OCI-LY7 (cell line): ENCODE measurements at regions of chr3 and their contacts with region 1.

Region 1: GRCh38 chr3:41198950-41199865 is at the start of gene CTNNB1:
- DNase-seq: peak; percentile 95
- H3K4me3 ChIP-seq: peak within 1 kb of the TSS; percentile 99
- H3K27ac ChIP-seq: peak within 1 kb of the TSS; percentile 85
- H3K4me1 ChIP-seq: peaks cover 32% of the 10 kb centered on the region
- CTCF ChIP-seq: no peak
- total RNA-seq, gene CTNNB1: 201 and 237 TPM in 2 replicates

Region 2: DNA sequence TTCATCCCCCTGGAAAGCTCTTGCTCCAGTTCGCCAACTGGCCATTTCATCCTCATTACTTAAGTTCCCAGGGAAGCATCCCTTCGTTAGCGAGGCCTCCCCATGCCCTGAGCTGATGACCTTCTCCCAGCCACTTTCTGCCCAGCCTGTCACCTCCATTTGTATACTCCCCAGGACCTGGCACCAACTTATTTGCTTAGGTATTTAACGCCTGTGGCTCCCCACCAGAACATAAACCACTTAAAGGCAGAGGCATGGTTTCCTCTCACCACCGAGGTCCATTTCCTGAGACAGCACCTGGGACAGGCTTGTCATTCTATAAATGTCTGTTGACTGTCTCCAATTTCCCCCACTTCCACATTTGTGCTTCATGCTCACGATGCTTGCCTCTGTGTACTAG is 485.4 kb before region 1 on chr3:
- CTCF ChIA-PET with region 1: no interaction called
- POLR2A ChIA-PET with region 1: interaction called, 3 read pairs
- intact Hi-C with region 1: loop called (anchors 2 kb)
- DNase-seq: peak; percentile 85
- H3K4me3 ChIP-seq: peak overlapping the region; percentile 9
- H3K27ac ChIP-seq: peak overlapping the region; percentile 68
- H3K4me1 ChIP-seq: peaks cover 63% of the 10 kb centered on the region
- CTCF ChIP-seq: no peak

Region 3: GRCh38 chr3:41117398-41117870 is 81.8 kb before region 1 on chr3:
- CTCF ChIA-PET with region 1: no interaction called
- POLR2A ChIA-PET with region 1: no interaction called
- intact Hi-C with region 1: no loop called
- DNase-seq: peak; percentile 27
- H3K4me3 ChIP-seq: no peak overlapping the region
- H3K27ac ChIP-seq: no peak overlapping the region
- H3K4me1 ChIP-seq: no peaks in the 10 kb centered on the region
- CTCF ChIP-seq: no peak